Natural killer cell (primary cell): ENCODE measurements at regions of chr9 and their contacts with region 1.

Region 1: GRCh38 chr9:99825172-99826046 is 3.7 kb downstream of the NR4A3 start:
- DNase-seq: no peak
- ATAC-seq: no peak
- H3K4me3 ChIP-seq: peak overlapping the region; percentile 79
- H3K4me3 Mint-ChIP-seq: peak overlapping the region; percentile 99
- H3K27ac ChIP-seq: peak overlapping the region; percentile 34
- H3K27ac Mint-ChIP-seq: peak overlapping the region; percentile 96 to 99
- H3K4me1 ChIP-seq: peaks cover 64% of the 10 kb centered on the region
- H3K4me1 Mint-ChIP-seq: peaks cover 66 to 70% of the 10 kb centered on the region in 2 donors
- H3K27me3 ChIP-seq: peaks cover 19% of the 10 kb centered on the region
- H3K27me3 Mint-ChIP-seq: peaks cover 66 to 67% of the 10 kb centered on the region in 2 donors
- CTCF ChIP-seq: no peak

Region 2: DNA sequence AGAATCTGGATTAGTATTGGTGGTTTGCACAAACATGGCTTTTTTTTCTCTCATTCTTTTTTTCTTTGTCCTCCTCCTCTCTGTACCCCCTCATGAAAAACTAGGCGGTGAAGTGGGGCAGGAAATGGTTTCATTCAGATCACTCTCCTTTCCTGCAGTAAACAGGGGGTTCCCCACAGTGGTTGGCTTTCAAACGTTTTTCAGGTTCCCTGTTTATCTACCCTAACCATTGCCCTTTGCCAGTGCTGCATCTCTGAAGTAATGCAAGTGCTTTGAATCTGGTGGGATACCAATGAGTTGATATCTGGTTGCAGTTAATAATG is 26.1 kb after region 1 on chr9:
- intact Hi-C with region 1: loop called (anchors 2 kb)
- DNase-seq: peak in 1 of 2 donors; percentile 80
- ATAC-seq: peak; percentile 85 to 92 (median 87)
- H3K4me3 ChIP-seq: no peak overlapping the region
- H3K4me3 Mint-ChIP-seq: peak overlapping the region; percentile 84
- H3K27ac ChIP-seq: peak overlapping the region; percentile 66
- H3K27ac Mint-ChIP-seq: peak overlapping the region; percentile 88 to 92
- H3K4me1 ChIP-seq: peaks cover 32% of the 10 kb centered on the region
- H3K4me1 Mint-ChIP-seq: peaks cover 36% of the 10 kb centered on the region in 2 donors
- H3K27me3 ChIP-seq: no peaks in the 10 kb centered on the region
- H3K27me3 Mint-ChIP-seq: no peaks in the 10 kb centered on the region
- CTCF ChIP-seq: no peak

Region 3: DNA sequence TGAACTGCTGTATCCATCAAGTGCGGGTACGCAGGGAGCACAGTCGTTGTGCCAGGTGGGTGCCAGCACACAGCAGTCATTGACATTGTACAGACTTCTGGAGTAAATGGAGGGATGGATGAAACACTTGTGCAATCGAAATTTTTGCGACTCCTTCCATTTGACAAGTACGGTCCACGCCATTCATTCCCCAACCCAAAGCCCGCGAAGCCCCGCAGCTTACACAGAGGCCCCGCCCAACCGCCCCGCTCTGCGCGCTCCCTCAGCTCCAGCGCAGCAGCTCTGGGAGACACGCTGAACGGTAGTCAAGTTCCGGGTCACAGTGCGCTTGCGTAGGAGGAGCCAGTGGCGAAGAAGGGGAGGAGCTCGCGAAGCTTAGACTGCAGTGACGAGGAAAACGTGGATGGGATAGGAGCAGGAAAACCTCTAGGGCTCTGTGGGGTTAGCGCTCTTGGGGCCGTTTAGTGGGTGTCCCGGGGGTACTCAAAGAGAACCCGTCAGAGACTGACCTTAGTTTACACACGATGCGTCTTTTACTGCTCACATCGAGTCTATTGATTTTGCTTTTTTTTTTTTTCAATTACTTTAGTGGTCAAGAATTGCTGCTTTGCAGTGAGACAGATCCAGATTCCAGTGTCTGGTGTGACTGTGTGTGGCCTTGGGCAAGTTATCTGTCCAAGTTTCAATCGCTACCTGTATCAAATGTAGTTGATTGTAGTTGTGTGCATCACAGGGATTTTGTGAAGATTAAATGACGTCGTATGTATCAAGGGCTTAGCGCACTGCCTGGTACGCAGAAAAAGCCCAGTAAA is 586.3 kb after region 1 on chr9:
- intact Hi-C with region 1: no loop called
- DNase-seq: peak; percentile 73 to 94
- ATAC-seq: peak; percentile 97 to 100 (median 100)
- H3K4me3 ChIP-seq: peak overlapping the region; percentile 62
- H3K4me3 Mint-ChIP-seq: peak overlapping the region; percentile 88
- H3K27ac ChIP-seq: no peak overlapping the region
- H3K27ac Mint-ChIP-seq: peak overlapping the region in 1 of 2 donors; percentile 68
- H3K4me1 ChIP-seq: peaks cover 12% of the 10 kb centered on the region
- H3K4me1 Mint-ChIP-seq: peaks cover 11% of the 10 kb centered on the region in 2 donors
- H3K27me3 ChIP-seq: peaks cover 3% of the 10 kb centered on the region
- H3K27me3 Mint-ChIP-seq: peaks cover 23 to 29% of the 10 kb centered on the region in 2 donors
- CTCF ChIP-seq: no peak